Gastrocnemius medialis (tissue), 4 donors: ENCODE measurements at regions of chr15 and their contacts with region 1.

Region 1: DNA sequence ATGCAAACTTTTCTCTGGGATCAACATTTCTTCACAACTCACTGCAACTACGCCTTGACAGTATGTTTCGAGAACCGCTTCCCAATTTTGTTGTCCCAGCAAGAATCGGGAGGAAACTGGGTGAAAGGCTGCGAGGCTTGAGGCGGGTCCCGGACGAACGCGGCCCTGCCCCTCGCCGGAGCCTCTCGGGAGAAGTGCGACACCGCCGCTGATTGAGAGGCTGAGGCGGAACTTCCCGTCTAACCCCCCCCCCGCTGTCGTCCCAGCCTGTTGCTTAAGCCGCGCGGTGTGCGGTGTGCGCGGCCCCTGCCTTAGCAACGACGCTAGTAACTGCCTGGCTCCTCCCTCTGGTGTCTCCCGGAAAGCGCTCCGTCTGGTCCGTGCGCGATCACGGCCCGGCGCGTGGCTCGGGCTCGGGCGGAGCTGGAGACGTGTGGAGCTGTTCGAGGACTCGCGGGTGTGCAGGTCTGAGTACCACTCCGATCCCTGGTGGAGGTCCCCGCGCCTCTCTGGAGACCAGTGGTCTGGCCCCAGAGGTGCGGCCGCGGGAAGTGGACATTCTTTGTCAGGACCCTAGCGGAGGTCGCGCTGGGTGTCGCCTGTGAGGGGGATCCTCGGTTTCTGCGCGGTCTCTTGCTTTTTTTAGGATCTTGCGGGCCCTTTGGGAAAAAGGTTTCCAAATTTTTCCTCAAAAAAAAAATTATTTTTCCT is at the starts of genes DTWD1 and FAM227B:
- DNase-seq: peak; percentile 95 to 97
- ATAC-seq: peak; percentile 97 to 98
- H3K4me3 ChIP-seq: peak within 1 kb of the TSS; percentile 85 to 99 (median 88)
- H3K27ac ChIP-seq: peak within 1 kb of the TSS; percentile 90 to 96 (median 92)
- H3K4me1 ChIP-seq: peaks cover 35 to 40% of the 10 kb centered on the region in 2 donors
- H3K27me3 ChIP-seq: no peaks in the 10 kb centered on the region
- CTCF ChIP-seq: peak in 4 of 5 experiments; percentile 4 to 32 (median 17)
- POLR2A ChIP-seq: peak; percentile 81 to 83
- total RNA-seq, gene DTWD1: 8.5 to 16.5 (median 11.8) TPM
- total RNA-seq, gene FAM227B: 7.5 to 15.4 (median 11.7) TPM

Region 2: GRCh38 chr15:48810414-48811317 is 810.1 kb before region 1 on chr15 and contains the start of gene CEP152:
- in situ Hi-C with region 1: no loop called
- intact Hi-C with region 1: loop called (anchors 5 kb)
- DNase-seq: peak; percentile 97 to 99
- ATAC-seq: peak; percentile 99
- H3K4me3 ChIP-seq: peak within 1 kb of the TSS; percentile 67 to 88 (median 79)
- H3K27ac ChIP-seq: peak within 1 kb of the TSS; percentile 21 to 61 (median 48)
- H3K4me1 ChIP-seq: peaks cover 0 to 8% of the 10 kb centered on the region in 2 donors
- H3K27me3 ChIP-seq: no peaks in the 10 kb centered on the region
- CTCF ChIP-seq: no peak
- POLR2A ChIP-seq: peak in 1 of 2 donors; percentile 39
- total RNA-seq, gene CEP152: 0.51 to 2.4 (median 1.4) TPM

Region 3: DNA sequence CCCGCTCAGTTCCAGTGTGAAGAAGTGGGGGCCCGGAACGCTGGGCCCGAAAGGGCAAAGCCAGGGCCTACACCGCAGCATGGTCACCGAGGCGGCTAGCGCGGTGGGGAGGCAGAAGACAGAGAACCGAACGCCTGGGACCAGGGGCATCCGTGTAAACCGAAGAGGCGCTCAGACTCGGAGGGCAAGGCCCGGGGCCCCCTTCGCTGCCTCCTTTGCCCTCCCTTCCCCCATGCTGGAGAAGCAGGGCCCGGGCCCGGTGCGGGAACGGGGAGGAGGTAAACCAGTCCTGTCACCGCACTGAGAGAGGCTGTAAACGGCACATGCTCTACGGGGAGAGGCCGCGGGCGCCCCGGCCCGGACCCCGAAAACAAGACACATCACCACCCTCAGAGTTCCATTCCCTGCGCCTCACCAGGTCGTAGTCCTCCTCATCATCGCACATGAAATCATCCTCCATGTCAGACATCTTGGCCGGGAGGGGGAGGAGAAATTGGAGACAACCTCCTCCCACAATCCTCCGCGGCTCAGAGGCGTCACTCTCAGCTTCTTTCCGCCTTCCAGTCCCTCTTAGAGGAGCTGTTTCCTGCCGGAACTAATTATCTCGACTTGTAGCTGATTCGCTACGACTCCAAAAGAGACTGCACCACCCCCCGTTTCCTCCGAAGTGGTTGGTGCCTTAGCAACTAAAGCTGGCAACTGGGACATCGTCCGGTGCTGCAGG is 465.5 kb before region 1 on chr15 and contains the start of gene COPS2:
- in situ Hi-C with region 1: loop called in 1 of 4 experiments (anchors 10 kb)
- intact Hi-C with region 1: loop called (anchors 2 kb)
- DNase-seq: peak; percentile 93 to 95
- ATAC-seq: peak; percentile 99 to 100
- H3K4me3 ChIP-seq: peak within 1 kb of the TSS; percentile 73 to 99 (median 84)
- H3K27ac ChIP-seq: peak within 1 kb of the TSS; percentile 85 to 96 (median 90)
- H3K4me1 ChIP-seq: peaks cover 36 to 45% of the 10 kb centered on the region in 2 donors
- H3K27me3 ChIP-seq: no peaks in the 10 kb centered on the region
- CTCF ChIP-seq: no peak
- POLR2A ChIP-seq: peak; percentile 45 to 66
- total RNA-seq, gene COPS2: 69.5 to 98.2 (median 93.2) TPM

Region 4: GRCh38 chr15:49421991-49422390 is 198.8 kb before region 1 on chr15:
- in situ Hi-C with region 1: no loop called
- intact Hi-C with region 1: loop called (anchors 10 kb)
- DNase-seq: peak in 1 of 2 donors; percentile 20
- ATAC-seq: peak; percentile 51 to 92
- H3K4me3 ChIP-seq: peak overlapping the region; percentile 30 to 40 (median 38)
- H3K27ac ChIP-seq: peak overlapping the region; percentile 1 to 59 (median 19)
- H3K4me1 ChIP-seq: no peaks in the 10 kb centered on the region
- H3K27me3 ChIP-seq: no peaks in the 10 kb centered on the region
- CTCF ChIP-seq: peak; percentile 81 to 96 (median 82)
- POLR2A ChIP-seq: no peak

Region 5: GRCh38 chr15:49751191-49751590 is 130.4 kb after region 1 on chr15:
- in situ Hi-C with region 1: no loop called
- intact Hi-C with region 1: no loop called
- DNase-seq: no peak
- ATAC-seq: no peak
- H3K4me3 ChIP-seq: no peak overlapping the region
- H3K27ac ChIP-seq: no peak overlapping the region
- H3K4me1 ChIP-seq: no peaks in the 10 kb centered on the region
- H3K27me3 ChIP-seq: no peaks in the 10 kb centered on the region
- CTCF ChIP-seq: no peak
- POLR2A ChIP-seq: no peak

Region 6: GRCh38 chr15:50908210-50909009 is 1287.6 kb after region 1 on chr15 and contains the start of gene AP4E1:
- in situ Hi-C with region 1: no loop called
- intact Hi-C with region 1: loop called (anchors 5 kb)
- DNase-seq: peak; percentile 78 to 86
- ATAC-seq: peak; percentile 89 to 95
- H3K4me3 ChIP-seq: peak within 1 kb of the TSS; percentile 80 to 99 (median 94)
- H3K27ac ChIP-seq: peak within 1 kb of the TSS; percentile 84 to 95 (median 92)
- H3K4me1 ChIP-seq: peaks cover 18 to 24% of the 10 kb centered on the region in 2 donors
- H3K27me3 ChIP-seq: no peaks in the 10 kb centered on the region
- CTCF ChIP-seq: peak; percentile 98 to 100 (median 99)
- POLR2A ChIP-seq: peak; percentile 63 to 75
- total RNA-seq, gene AP4E1: 11.6 to 14.0 (median 13.4) TPM